Dendritic cell treated with granulocyte-macrophage colony-stimulating factor and Interleukin-4, amounts not matched to agents 40 ng/mL and 50 ng/mL, for 4 days (primary cell): ENCODE measurements at regions of chr5 and their contacts with region 1.

Region 1: DNA sequence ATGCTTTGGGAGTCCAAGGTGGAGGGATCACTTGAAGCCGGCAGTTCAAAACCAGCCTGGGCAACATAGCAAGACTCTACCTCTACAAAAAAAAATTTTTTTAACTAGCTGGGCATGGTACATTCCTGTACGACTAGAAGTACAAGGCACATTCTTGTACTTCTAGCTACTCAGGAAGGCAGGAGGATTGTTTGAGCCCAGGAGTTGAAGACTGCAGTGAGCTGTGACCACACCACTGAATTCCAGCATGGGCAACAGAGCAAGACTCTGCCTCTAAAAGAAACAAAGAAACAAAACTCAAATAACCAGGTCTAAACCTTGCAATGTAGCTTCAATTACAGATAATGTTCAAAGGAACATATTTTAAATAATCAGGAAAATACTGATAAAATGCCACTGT is 56.2 kb downstream of the SSBP2 start:
- H3K4me3 Mint-ChIP-seq: no peak overlapping the region
- H3K27ac Mint-ChIP-seq: no peak overlapping the region
- H3K4me1 Mint-ChIP-seq: no peaks in the 10 kb centered on the region
- H3K27me3 Mint-ChIP-seq: no peaks in the 10 kb centered on the region

Region 2: DNA sequence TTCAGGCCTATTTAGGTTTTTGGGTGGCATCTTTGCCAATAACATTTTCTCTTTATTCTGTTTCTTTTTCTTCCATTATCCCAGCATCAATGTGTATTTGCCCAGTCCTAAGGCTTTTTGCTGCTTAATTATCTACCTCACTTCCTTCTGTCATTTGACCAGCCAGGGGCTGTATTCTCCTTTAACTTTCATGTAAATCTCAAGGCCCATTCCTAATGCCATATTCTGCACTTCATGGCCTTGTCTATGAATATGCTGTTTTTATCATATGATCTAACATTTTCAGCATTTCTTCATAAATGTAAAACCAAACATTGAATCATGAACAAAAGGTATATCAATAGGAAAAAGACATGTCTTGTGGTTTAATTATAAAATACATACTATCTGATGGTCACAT is 52.5 kb before region 1 on chr5:
- intact Hi-C with region 1: no loop called
- H3K4me3 Mint-ChIP-seq: no peak overlapping the region
- H3K27ac Mint-ChIP-seq: no peak overlapping the region
- H3K4me1 Mint-ChIP-seq: no peaks in the 10 kb centered on the region
- H3K27me3 Mint-ChIP-seq: no peaks in the 10 kb centered on the region

Region 3: DNA sequence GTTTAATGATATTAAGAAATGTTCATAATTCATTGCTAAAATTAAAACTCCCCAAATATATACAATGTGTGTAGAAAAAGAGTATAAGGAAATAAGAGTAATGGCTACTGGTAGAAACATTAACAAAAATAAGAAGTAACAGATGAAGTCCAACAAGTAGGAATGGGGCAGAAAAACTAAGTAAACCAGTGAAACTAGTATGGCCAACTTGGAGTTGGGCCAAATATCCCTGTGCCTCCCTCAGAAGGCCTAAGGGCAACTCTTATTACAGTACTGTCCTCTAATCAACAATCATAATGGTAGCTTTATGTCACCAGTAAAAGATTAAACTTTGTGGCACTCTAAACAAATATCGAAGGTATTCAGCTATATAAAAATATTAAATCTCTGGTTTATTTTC is 37.3 kb before region 1 on chr5:
- intact Hi-C with region 1: loop called (anchors 5 kb)
- H3K4me3 Mint-ChIP-seq: no peak overlapping the region
- H3K27ac Mint-ChIP-seq: no peak overlapping the region
- H3K4me1 Mint-ChIP-seq: peaks cover 5% of the 10 kb centered on the region
- H3K27me3 Mint-ChIP-seq: no peaks in the 10 kb centered on the region